SK-N-SH (cell line): ENCODE measurements at regions of chr15 and their contacts with region 1.

Region 1: DNA sequence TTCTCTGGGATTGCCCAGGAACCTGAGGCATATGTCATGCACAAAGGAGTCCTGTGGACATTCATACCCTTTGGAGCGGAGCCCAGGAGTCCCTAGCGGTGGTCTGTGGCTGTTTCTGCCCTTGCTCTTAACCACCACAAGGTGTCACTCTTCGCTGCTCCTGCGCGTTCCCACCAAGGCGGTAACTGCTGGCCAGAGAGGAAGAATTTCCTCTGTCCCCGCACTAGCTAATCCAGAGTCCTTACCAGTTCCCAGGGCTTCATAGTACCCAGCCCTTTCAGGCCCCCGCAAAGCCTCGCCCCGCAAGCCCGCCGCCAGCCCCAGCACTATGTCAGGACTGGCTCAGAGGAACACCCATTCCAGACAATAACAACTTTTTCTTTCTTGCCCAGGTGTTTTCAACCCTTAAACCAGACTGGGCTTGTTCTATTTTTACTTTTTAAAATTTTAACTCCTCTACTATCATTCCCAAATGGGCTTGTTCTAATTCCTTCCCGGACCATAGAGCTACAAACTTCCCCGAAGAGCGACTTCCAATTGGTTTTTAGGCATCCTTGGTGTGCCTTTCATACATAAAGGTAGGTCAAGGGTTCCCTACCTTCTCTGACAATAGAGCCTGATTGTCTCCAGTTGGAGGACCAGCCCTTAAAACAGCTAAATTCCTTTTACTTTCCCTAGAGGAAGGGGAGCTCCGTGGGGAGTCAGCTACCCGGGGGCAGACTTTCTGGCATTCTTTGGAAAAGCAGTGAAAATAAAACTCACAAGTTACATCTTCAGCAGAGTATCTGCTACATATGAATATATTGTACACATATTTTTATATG is 31.8 kb upstream of the ZNF774 start:
- DNase-seq: peak; percentile 85
- H3K4me3 ChIP-seq: peak overlapping the region in 1 of 2 experiments; percentile 13; a peak in 1 of 4 replicates
- H3K27ac ChIP-seq: no peak overlapping the region
- H3K4me1 ChIP-seq: peaks cover 0 to 5% of the 10 kb centered on the region in 2 experiments; a peak in 1 of 4 replicates
- H3K27me3 ChIP-seq: no peaks in the 10 kb centered on the region
- CTCF ChIP-seq: peak; percentile 97
- EP300 ChIP-seq: no peak
- RAD21 ChIP-seq: peak; percentile 98

Region 2: GRCh38 chr15:90211431-90212143 is 108.7 kb before region 1 on chr15:
- CTCF ChIA-PET with region 1: no interaction called
- POLR2A ChIA-PET with region 1: no interaction called
- DNase-seq: no peak
- H3K4me3 ChIP-seq: no peak overlapping the region
- H3K27ac ChIP-seq: peak overlapping the region in 1 of 2 experiments; percentile 35; a peak in 1 of 4 replicates
- H3K4me1 ChIP-seq: peaks cover 9 to 38% of the 10 kb centered on the region in 2 experiments; a peak in 2 of 4 replicates
- H3K27me3 ChIP-seq: no peaks in the 10 kb centered on the region
- CTCF ChIP-seq: no peak
- EP300 ChIP-seq: no peak
- RAD21 ChIP-seq: no peak

Region 3: GRCh38 chr15:90291679-90292356 is 28.5 kb before region 1 on chr15:
- CTCF ChIA-PET with region 1: interaction called, 15 read pairs
- POLR2A ChIA-PET with region 1: no interaction called
- DNase-seq: peak; percentile 57
- H3K4me3 ChIP-seq: no peak overlapping the region
- H3K27ac ChIP-seq: no peak overlapping the region
- H3K4me1 ChIP-seq: peaks cover 0 to 3% of the 10 kb centered on the region in 2 experiments; a peak in 1 of 4 replicates
- H3K27me3 ChIP-seq: no peaks in the 10 kb centered on the region
- CTCF ChIP-seq: no peak
- EP300 ChIP-seq: no peak
- RAD21 ChIP-seq: no peak

Region 4: GRCh38 chr15:90306560-90306959 is 13.7 kb before region 1 on chr15:
- CTCF ChIA-PET with region 1: interaction called, 41 read pairs
- POLR2A ChIA-PET with region 1: no interaction called
- DNase-seq: no peak
- H3K4me3 ChIP-seq: no peak overlapping the region
- H3K27ac ChIP-seq: no peak overlapping the region
- H3K4me1 ChIP-seq: peaks cover 0 to under 1% of the 10 kb centered on the region in 2 experiments; a peak in 1 of 4 replicates
- H3K27me3 ChIP-seq: no peaks in the 10 kb centered on the region
- CTCF ChIP-seq: no peak
- EP300 ChIP-seq: no peak
- RAD21 ChIP-seq: no peak

Region 5: GRCh38 chr15:90362936-90363212 is 42.6 kb after region 1 on chr15:
- CTCF ChIA-PET with region 1: interaction called, 13 read pairs
- POLR2A ChIA-PET with region 1: no interaction called
- DNase-seq: no peak
- H3K4me3 ChIP-seq: no peak overlapping the region
- H3K27ac ChIP-seq: peak overlapping the region; percentile 76 to 91
- H3K4me1 ChIP-seq: peaks cover 0 to 19% of the 10 kb centered on the region in 2 experiments
- H3K27me3 ChIP-seq: no peaks in the 10 kb centered on the region
- CTCF ChIP-seq: no peak
- EP300 ChIP-seq: no peak; a peak in 1 of 4 replicates
- RAD21 ChIP-seq: no peak

Region 6: DNA sequence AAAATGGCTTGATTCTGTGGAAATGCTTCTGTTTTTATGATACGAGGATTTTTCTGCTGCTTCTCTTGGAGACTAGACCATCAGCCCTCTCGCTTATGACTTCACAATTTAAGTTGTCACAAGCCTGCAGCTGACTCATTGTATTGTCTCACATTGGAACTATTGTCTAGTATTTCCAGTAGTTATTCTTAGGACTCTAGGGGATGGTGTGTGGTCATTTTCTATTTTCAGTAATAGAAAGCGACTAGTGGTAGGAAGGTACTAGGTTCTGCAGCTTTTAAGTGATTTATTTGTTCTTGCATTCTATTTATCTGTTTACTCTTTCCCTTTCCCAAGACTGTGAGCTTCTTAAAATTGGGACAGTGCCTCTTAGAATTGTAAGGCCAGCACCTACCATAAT is 143.1 kb after region 1 on chr15:
- CTCF ChIA-PET with region 1: interaction called, 13 read pairs
- POLR2A ChIA-PET with region 1: interaction called, 3 read pairs
- DNase-seq: no peak
- H3K4me3 ChIP-seq: 0 out of 4 replicates have a peak overlapping the region, but pooled peaks of 1 of the 2 experiments have one; percentile 5
- H3K27ac ChIP-seq: peak overlapping the region; percentile 50 to 91; a peak in 3 of 4 replicates
- H3K4me1 ChIP-seq: peaks cover 0 to 35% of the 10 kb centered on the region in 2 experiments; a peak in 2 of 4 replicates
- H3K27me3 ChIP-seq: no peaks in the 10 kb centered on the region
- CTCF ChIP-seq: peak; percentile 32
- EP300 ChIP-seq: no peak
- RAD21 ChIP-seq: no peak

Region 7: GRCh38 chr15:90489514-90489913 is 169.2 kb after region 1 on chr15:
- CTCF ChIA-PET with region 1: interaction called, 116 read pairs
- POLR2A ChIA-PET with region 1: no interaction called
- DNase-seq: no peak
- H3K4me3 ChIP-seq: no peak overlapping the region
- H3K27ac ChIP-seq: no peak overlapping the region
- H3K4me1 ChIP-seq: no peaks in the 10 kb centered on the region
- H3K27me3 ChIP-seq: no peaks in the 10 kb centered on the region
- CTCF ChIP-seq: no peak
- EP300 ChIP-seq: no peak
- RAD21 ChIP-seq: no peak

Region 8: DNA sequence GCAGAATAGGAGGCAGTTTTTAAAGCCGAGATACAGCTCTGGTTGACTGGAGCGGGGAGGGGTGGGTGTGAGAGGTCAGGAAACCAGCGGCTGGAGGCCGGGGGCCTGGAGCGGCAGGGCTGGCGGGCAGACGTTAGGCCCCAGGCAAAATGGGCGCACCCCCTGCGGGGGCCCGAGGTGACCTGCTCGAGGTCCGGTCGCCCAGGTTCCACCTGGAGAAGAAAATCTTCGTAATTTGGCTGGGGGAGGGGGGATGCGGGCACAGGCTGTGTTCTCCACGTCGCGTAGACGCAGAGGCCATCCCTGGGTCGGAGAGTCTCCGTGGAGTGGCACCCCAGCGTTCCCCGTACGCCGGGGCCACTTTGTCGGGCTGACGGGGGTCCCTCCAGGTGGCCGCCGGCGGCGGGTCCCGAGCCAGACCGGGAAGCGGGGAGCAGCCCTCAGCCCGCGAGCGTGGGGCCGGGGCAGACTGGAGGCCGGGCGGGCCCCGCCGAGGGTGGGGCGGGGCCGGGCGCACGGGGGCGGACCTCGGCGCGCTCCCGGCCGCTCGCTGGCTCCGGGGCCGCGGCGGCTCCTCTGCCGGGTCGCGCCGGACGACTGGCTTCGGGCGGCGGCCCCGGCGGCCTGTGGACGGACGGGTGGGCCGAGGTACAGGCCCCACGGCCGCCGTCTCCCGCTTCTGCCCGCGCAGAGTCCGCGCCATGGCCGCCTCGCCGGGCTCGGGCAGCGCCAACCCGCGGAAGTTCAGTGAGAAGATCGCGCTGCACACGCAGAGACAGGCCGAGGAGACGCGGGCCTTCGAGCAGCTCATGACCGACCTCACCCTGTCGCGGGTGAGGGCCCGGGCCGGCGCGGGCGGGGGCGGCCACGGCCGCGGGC is 209.3 kb after region 1 on chr15 and contains the start of gene CRTC3:
- CTCF ChIA-PET with region 1: no interaction called
- POLR2A ChIA-PET with region 1: no interaction called
- DNase-seq: peak; percentile 94
- H3K4me3 ChIP-seq: peak within 1 kb of the TSS; percentile 77 to 86
- H3K27ac ChIP-seq: peak within 1 kb of the TSS; percentile 71 to 81
- H3K4me1 ChIP-seq: peaks cover 5 to 8% of the 10 kb centered on the region in 2 experiments; a peak in 2 of 4 replicates
- H3K27me3 ChIP-seq: no peaks in the 10 kb centered on the region
- CTCF ChIP-seq: no peak
- EP300 ChIP-seq: no peak
- RAD21 ChIP-seq: no peak
- polyA plus RNA-seq, gene CRTC3: 16.7 TPM in 2 replicates

Region 9: DNA sequence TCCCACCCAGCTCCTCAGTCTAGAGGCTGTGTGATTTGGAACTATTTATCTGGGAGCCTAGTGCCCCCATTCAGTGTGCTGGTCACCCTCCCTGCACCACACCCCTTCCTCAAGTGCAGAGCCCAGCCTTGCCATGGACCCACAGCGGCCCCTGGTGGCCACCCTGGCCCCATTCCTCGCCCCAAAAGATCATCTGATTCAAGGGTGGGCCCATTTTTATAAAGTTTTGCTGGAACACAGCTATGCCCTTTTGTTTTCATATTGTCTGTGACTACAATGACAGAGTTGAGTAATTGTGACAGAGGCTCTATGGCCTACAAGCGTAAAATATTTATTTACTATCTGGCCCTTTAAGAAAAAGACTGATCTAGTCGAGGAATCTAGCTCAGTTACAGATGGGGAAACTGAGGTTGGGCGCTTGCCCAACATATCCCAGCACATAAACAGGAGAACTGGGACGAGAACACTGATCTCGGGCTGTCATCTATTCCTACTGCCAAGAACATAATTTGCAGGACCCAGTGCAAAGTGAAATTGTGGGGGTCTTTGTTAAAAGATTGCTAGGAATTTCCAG is 565.9 kb after region 1 on chr15:
- CTCF ChIA-PET with region 1: interaction called, 28 read pairs
- POLR2A ChIA-PET with region 1: no interaction called
- DNase-seq: peak; percentile 91
- H3K4me3 ChIP-seq: peak overlapping the region in 1 of 2 experiments; percentile 47; a peak in 1 of 4 replicates
- H3K27ac ChIP-seq: no peak overlapping the region
- H3K4me1 ChIP-seq: peaks cover 0 to 14% of the 10 kb centered on the region in 2 experiments; a peak in 1 of 4 replicates
- H3K27me3 ChIP-seq: no peaks in the 10 kb centered on the region
- CTCF ChIP-seq: peak; percentile 99
- EP300 ChIP-seq: no peak
- RAD21 ChIP-seq: peak; percentile 96

Region 10: DNA sequence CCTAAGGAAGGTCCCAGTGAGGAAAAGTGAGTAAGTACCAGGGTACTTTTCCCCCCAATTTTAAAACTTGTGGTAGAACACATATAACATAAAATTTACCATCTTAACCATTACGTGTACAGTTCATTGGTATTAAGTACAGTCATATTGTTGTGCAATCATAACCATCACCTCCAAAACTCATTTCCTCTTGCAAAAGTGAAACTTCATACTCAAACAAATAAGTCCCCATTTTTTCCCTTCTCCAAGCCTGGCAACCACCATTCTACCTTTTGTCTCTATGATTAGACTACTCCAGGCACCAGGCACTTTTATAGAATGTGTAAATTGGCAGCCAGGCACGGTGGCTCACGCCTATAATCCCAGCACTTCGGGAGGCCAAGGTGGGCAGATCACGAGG is 661.9 kb after region 1 on chr15:
- CTCF ChIA-PET with region 1: no interaction called
- POLR2A ChIA-PET with region 1: no interaction called
- DNase-seq: no peak
- H3K4me3 ChIP-seq: no peak overlapping the region
- H3K27ac ChIP-seq: no peak overlapping the region
- H3K4me1 ChIP-seq: no peaks in the 10 kb centered on the region; a peak in 2 of 4 replicates
- H3K27me3 ChIP-seq: no peaks in the 10 kb centered on the region
- CTCF ChIP-seq: no peak
- EP300 ChIP-seq: no peak
- RAD21 ChIP-seq: no peak